A673 (cell line): ENCODE measurements at regions of chr5 and their contacts with region 1.

Region 1: GRCh38 chr5:173315495-173316350 is 12.5 kb downstream of the STC2 start:
- DNase-seq: peak; percentile 58
- H3K4me3 ChIP-seq: no peak overlapping the region
- H3K27ac ChIP-seq: peak overlapping the region; percentile 29
- H3K4me1 ChIP-seq: peaks cover 16% of the 10 kb centered on the region
- H3K27me3 ChIP-seq: no peaks in the 10 kb centered on the region
- CTCF ChIP-seq: no peak

Region 2: DNA sequence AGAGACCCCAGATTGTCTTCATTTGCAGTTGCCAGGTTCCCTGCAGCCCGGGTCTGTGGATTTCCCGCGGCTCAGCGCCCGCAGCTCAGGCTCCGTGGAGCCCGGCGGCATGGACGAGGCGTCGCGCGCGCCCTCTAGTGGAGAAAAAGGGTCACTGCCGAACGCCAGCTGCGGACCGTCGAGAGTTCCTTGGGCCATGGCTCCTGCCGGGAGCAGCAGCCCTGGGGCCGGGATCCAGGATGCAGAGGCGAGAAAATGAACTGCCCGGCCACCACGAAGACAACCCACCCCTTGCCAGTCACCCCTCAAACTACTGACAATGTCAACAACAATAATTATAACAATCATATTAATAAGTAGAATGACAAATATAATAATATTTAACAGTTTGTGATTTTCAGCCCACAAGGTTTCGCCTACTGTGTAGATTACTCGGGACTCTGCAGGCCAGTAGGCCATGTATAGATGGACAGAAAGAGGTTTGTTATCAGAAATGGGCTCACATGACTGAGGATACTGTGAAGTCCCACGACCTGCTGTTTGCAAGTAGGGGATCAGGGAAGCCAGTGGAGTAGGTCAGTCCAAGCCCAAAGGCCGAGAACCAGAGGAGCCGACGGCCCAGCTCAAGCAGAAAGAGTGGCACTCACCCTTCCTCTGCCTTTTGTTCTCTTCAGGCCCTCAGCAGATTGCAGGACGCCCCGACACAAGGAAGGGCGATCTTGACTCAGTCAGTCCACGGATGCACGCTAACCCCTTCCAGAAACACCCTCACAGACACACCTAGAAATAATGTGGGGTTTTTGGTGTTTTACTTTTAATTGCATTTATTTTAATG is 257.6 kb after region 1 on chr5:
- CTCF ChIA-PET with region 1: no interaction called
- POLR2A ChIA-PET with region 1: interaction called, 11 read pairs
- intact Hi-C with region 1: no loop called
- DNase-seq: peak; percentile 65
- H3K4me3 ChIP-seq: no peak overlapping the region
- H3K27ac ChIP-seq: no peak overlapping the region
- H3K4me1 ChIP-seq: no peaks in the 10 kb centered on the region
- H3K27me3 ChIP-seq: no peaks in the 10 kb centered on the region
- CTCF ChIP-seq: peak; percentile 91